Dendritic cell treated with granulocyte-macrophage colony-stimulating factor and Interleukin-4, amounts not matched to agents 40 ng/mL and 50 ng/mL, for 4 days (primary cell): ENCODE measurements at regions of chr12 and their contacts with region 1.

Region 1: GRCh38 chr12:68695454-68695853 is 8.7 kb downstream of the NUP107 start:
- H3K4me3 Mint-ChIP-seq: no peak overlapping the region
- H3K27ac Mint-ChIP-seq: no peak overlapping the region
- H3K4me1 Mint-ChIP-seq: no peaks in the 10 kb centered on the region
- H3K27me3 Mint-ChIP-seq: no peaks in the 10 kb centered on the region

Region 2: GRCh38 chr12:68648179-68648578 is 47.3 kb before region 1 on chr12:
- intact Hi-C with region 1: loop called (anchors 10 kb)
- H3K4me3 Mint-ChIP-seq: no peak overlapping the region
- H3K27ac Mint-ChIP-seq: no peak overlapping the region
- H3K4me1 Mint-ChIP-seq: peaks cover 12% of the 10 kb centered on the region
- H3K27me3 Mint-ChIP-seq: no peaks in the 10 kb centered on the region

Region 3: GRCh38 chr12:69751476-69751875 is 1056.0 kb after region 1 on chr12:
- intact Hi-C with region 1: no loop called
- H3K4me3 Mint-ChIP-seq: no peak overlapping the region
- H3K27ac Mint-ChIP-seq: no peak overlapping the region
- H3K4me1 Mint-ChIP-seq: no peaks in the 10 kb centered on the region
- H3K27me3 Mint-ChIP-seq: no peaks in the 10 kb centered on the region